ENCODE measurements at regions of chr2 and their contacts with region 1.

Region 1: DNA sequence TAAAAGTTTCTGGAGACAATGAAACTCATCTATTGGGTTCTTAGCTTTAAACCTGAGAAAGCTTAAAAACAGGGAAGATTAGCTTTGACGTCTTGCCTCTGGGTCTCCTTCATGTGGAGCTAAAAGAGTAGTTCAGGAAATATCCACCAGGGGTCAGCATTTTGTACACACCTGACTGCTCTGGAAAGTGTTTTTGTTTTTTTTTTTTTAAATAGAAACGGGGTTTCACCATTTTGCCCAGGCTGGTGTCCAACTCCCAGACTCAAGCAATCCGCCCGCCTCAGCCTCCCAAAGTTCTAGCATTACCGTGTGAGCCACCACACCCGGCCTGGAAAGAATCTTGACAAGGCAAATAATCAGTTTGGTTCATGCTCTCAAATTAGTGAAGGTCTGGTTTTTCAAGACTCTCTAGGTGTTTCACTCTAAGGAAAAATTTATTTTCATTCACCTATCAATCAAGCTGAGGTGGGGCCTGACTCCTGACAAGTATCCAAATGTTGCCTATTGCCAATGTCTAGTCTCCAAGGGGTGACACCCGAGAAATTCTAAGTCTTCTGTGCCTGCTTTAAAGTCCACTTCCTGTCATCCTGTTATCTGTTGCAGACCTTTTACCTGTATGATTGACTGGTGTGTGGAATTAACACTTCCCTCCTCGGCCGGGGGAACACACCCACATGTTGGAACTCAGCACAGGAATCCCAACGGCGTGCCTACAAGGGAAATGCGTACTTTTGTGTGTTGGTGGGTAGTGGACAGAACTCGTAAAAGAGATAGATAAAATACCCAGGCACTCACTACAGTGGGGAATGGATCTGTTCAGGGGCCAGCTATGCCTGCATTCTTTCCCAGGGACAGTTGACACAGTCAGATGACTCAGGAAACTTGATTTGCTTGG is 11.3 kb downstream of the IL1RN start:
- DNase-seq: peak; percentile 91
- ATAC-seq: peak; percentile 47
- H3K4me3 ChIP-seq: peak overlapping the region; percentile 36; the same call in 1 of the 2 replicates
- H3K27ac ChIP-seq: 0 out of 2 replicates have a peak overlapping the region, but pooled peaks have one; percentile 0
- H3K4me1 ChIP-seq: peaks cover 17% of the 10 kb centered on the region
- H3K27me3 ChIP-seq: no peaks in the 10 kb centered on the region
- CTCF ChIP-seq: peak; percentile 86

Region 2: DNA sequence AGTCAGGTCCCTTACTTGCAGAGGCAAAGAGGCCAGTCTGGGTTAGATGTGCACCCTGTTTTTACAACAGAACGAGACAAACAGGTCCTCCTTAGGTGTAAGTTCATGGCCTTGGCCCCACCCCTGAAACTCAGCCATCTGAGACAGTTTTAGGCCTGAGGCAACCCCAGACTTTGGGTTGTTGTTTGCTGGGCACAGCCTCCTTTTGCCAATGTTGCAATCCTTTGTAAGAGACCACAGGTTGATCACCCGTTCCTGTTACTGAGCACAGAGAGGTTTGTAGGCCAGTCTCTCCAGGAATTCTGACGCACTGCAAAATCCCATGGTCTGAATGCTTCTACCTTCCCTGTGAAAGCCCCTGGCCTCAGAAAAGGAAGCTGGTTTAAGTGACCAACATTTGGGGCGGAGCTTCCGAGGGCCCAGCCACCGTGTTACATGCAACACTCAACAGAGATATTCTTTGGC is 26.8 kb before region 1 on chr2:
- CTCF ChIA-PET with region 1: no interaction called
- POLR2A ChIA-PET with region 1: no interaction called
- intact Hi-C with region 1: no loop called
- DNase-seq: no peak
- ATAC-seq: no peak
- H3K4me3 ChIP-seq: no peak overlapping the region
- H3K27ac ChIP-seq: no peak overlapping the region
- H3K4me1 ChIP-seq: peaks cover 17% of the 10 kb centered on the region
- H3K27me3 ChIP-seq: no peaks in the 10 kb centered on the region
- CTCF ChIP-seq: no peak

Region 3: DNA sequence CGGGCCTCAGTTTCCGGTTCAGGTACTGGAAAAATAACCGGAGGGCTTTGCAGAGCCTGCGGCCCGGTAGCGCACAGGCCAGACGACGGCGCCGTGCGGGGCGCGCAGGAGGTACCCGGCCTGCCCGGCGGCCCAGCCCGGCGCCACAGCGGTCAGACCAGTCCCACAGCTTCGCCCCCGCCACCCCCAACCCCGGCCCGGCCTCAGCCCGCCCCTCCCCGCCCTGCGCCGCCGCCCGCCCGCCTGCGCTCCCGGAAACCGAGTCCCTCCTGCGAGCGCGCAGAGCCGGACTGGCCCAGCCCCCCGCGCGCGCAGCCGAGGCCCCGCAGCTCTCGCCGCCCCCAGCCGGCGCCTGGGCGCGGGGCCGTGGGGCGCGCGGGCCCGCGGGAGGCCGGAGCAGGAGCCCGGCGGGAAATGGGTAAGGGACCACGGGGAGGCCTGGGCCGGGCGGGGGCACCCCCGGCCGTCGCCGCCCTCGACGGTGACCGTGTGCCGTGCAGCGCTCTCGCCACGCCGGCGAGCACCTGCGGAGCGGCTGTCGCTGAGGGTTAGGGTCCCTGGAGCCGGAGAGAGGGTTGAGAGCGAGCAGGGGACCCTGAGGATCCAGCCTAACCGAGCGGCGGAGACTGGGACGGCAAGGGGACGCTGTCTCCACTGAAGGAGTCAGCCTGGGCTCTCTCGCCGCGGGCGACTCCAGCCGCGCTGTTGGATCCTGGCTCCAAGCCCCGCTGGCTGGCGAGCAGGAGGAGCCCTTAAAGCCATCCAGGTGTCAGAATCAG is 18.6 kb after region 1 on chr2:
- CTCF ChIA-PET with region 1: interaction called, 16 read pairs
- POLR2A ChIA-PET with region 1: interaction called, 6 read pairs
- intact Hi-C with region 1: loop called (anchors 1 kb)
- DNase-seq: peak; percentile 75
- ATAC-seq: peak; percentile 60
- H3K4me3 ChIP-seq: peak overlapping the region; percentile 83
- H3K27ac ChIP-seq: peak overlapping the region; percentile 90
- H3K4me1 ChIP-seq: peaks cover 30% of the 10 kb centered on the region
- H3K27me3 ChIP-seq: no peaks in the 10 kb centered on the region
- CTCF ChIP-seq: no peak

Region 4: DNA sequence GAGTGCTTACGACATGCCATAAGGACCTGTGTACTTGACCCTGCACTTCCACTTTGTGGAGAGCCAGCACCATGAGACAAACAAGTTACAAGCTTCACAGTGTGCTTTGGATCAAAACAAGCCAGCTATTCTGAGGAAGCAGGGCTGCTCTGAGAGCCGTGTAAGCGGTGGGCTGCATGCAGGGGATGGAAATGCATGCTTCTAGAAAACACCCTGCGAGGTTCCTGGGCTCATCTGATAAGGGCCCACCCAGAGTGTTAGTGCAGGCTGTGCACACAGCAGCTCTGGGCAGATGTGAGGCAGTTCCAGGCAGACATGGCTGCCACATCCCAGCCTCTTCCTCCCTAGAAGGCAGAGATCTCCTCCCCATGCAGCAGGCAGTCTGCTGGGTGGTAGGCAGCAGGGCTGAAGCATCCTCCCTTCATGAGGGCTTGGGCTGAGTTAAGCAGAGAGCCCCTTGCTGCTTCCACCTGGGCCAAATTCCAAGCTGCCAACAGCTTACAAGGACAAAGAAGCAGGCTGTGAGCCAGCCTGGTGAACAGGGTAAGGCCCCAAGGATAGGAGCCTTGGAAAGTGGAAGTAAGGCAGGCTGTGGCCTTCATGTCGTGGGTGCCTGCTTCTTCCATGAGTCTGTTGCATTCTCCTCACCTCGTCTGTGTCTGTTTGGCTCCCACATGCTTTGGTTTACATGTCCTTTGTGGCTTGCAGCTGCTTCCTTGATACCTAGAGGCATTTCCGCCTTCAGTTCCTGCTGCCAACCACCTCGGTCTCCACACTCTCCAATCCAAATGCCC is 42.8 kb after region 1 on chr2:
- CTCF ChIA-PET with region 1: no interaction called
- POLR2A ChIA-PET with region 1: no interaction called
- intact Hi-C with region 1: no loop called
- DNase-seq: no peak
- ATAC-seq: no peak
- H3K4me3 ChIP-seq: no peak overlapping the region
- H3K27ac ChIP-seq: no peak overlapping the region
- H3K4me1 ChIP-seq: no peaks in the 10 kb centered on the region
- H3K27me3 ChIP-seq: no peaks in the 10 kb centered on the region
- CTCF ChIP-seq: no peak

Region 5: GRCh38 chr2:113198790-113199612 is 60.3 kb after region 1 on chr2:
- CTCF ChIA-PET with region 1: interaction called, 39 read pairs
- POLR2A ChIA-PET with region 1: interaction called, 6 read pairs
- intact Hi-C with region 1: loop called (anchors 1 kb)
- DNase-seq: peak; percentile 95
- ATAC-seq: peak; percentile 82
- H3K4me3 ChIP-seq: peak overlapping the region; percentile 78
- H3K27ac ChIP-seq: peak overlapping the region; percentile 80
- H3K4me1 ChIP-seq: peaks cover 15% of the 10 kb centered on the region
- H3K27me3 ChIP-seq: no peaks in the 10 kb centered on the region
- CTCF ChIP-seq: peak; percentile 86

Region 6: GRCh38 chr2:113390124-113390849 is 251.6 kb after region 1 on chr2:
- CTCF ChIA-PET with region 1: interaction called, 6 read pairs
- POLR2A ChIA-PET with region 1: no interaction called
- intact Hi-C with region 1: loop called (anchors 2 kb)
- DNase-seq: peak; percentile 87
- ATAC-seq: peak; percentile 73
- H3K4me3 ChIP-seq: no peak overlapping the region; the same call in 1 of the 2 replicates
- H3K27ac ChIP-seq: no peak overlapping the region
- H3K4me1 ChIP-seq: no peaks in the 10 kb centered on the region
- H3K27me3 ChIP-seq: no peaks in the 10 kb centered on the region
- CTCF ChIP-seq: peak; percentile 92